Posterior cingulate gyrus (tissue), 11 donors: ENCODE measurements at regions of chr17 and their contacts with region 1.

Region 1: DNA sequence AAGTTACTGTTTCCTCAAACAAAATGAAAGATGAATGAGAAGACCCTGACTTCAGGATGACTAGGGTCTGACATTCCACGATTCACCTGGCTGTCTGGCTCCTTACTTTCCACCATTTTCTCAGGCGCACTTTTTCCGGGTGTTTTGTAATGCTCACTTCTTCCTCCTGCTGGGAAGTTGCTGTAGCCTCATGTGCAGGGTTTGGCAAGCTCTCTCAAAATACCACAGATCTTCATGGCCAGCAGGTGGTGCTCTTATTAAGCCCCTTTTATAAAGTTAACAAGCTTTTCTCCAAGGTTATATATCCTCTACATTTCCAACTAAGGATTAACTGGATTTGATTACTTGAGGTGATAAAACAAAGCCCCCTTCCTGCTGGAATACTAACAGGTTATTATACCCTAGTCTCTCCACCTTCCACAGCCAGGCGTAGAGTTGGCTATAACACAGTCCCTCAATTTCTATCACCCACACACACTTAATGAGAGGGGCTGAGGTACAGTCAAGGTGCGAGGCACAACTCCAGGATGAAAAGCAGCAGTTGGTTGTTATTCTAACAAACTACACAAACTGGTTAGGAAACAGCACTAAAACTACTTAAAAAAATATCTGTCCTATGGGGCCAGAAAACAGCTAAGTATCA is 45.4 kb downstream of the STH start:
- DNase-seq: peak in 6 of 10 donors; percentile 47 to 83 (median 60)

Region 2: GRCh38 chr17:46002311-46002972 is 42.0 kb before region 1 on chr17:
- intact Hi-C with region 1: loop called (anchors 2 kb)
- DNase-seq: peak in 8 of 10 donors; percentile 51 to 93 (median 74)

Region 3: GRCh38 chr17:46212634-46213435 is 168.4 kb after region 1 on chr17:
- intact Hi-C with region 1: loop called (anchors 1 kb)
- DNase-seq: peak in 5 of 10 donors; percentile 27 to 63 (median 42)